ENCODE measurements at regions of chr11 and their contacts with region 1.

Region 1: GRCh38 chr11:34653826-34654490 is 33.1 kb downstream of the EHF start:
- DNase-seq: peak; percentile 66 to 82
- H3K4me3 ChIP-seq: no peak overlapping the region
- H3K4me3 Mint-ChIP-seq: no peak overlapping the region
- H3K27ac Mint-ChIP-seq: peak overlapping the region; percentile 15
- H3K4me1 ChIP-seq: peaks cover 21% of the 10 kb centered on the region
- H3K4me1 Mint-ChIP-seq: peaks cover 26% of the 10 kb centered on the region
- H3K27me3 ChIP-seq: no peaks in the 10 kb centered on the region
- H3K27me3 Mint-ChIP-seq: no peaks in the 10 kb centered on the region
- CTCF ChIP-seq: peak in 1 of 2 experiments; percentile 40

Region 2: DNA sequence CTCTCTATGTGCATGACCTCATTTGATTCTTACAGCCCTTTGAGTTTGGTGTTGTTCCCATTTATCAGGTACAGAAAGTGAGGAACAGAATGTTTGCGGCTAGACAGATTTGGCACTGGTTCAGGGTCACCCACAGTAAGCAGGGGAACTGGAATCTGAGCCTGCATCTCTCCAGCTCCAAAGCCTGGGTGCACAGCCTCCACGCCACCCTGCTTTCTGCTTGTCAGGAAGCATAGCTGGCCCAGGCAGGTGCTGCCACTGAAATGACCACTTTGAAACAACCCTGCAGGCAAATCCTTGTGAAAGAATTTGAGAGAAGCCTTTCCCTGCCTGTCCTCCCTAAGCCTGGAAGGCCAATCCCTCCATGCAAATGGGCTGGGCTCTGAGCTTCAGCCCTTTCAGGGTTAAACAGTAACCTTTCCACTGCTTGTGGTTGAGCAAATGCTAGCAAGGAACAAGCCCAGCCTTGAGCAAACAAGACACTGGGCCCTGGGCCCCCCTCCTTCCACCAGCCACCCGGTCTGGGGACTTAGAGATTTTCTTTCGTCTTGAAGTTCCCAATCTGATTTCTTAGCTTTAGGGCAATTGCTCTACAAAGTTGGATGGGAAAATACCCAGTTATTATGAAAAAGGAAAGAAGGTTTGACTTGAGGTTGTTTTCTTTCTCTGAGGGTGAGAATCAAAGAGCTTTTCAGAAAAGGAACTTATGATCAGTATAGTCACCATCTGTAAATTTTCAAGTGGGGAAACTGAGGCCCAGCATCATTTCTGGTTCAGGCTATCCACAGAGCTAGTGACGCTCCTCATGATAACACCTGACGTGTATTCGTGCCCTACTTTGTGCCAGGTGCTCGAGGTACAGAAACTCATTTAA is 13.7 kb before region 1 on chr11:
- CTCF ChIA-PET with region 1: interaction called, 4 read pairs
- POLR2A ChIA-PET with region 1: interaction called, 5 read pairs
- intact Hi-C with region 1: loop called (anchors 1 kb)
- DNase-seq: peak; percentile 91 to 96
- H3K4me3 ChIP-seq: no peak overlapping the region
- H3K4me3 Mint-ChIP-seq: peak overlapping the region; percentile 55
- H3K27ac Mint-ChIP-seq: peak overlapping the region; percentile 66
- H3K4me1 ChIP-seq: peaks cover 58% of the 10 kb centered on the region
- H3K4me1 Mint-ChIP-seq: peaks cover 62% of the 10 kb centered on the region
- H3K27me3 ChIP-seq: no peaks in the 10 kb centered on the region
- H3K27me3 Mint-ChIP-seq: no peaks in the 10 kb centered on the region
- CTCF ChIP-seq: no peak

Measured in Caco-2 (cell line).